Right ventricle myocardium inferior (tissue), 1 donor: ENCODE measurements at regions of chr10 and their contacts with region 1.

Region 1: GRCh38 chr10:15168781-15169554 is 475 bp upstream of the NMT2 start:
- DNase-seq: peak; percentile 96
- ATAC-seq: peak; percentile 91

Region 2: GRCh38 chr10:14604181-14605142 is 564.5 kb before region 1 on chr10:
- intact Hi-C with region 1: loop called (anchors 10 kb)
- DNase-seq: peak; percentile 93
- ATAC-seq: peak; percentile 98

Region 3: GRCh38 chr10:14878266-14879054 is 290.5 kb before region 1 on chr10 and contains the start of gene SUV39H2:
- intact Hi-C with region 1: loop called (anchors 5 kb)
- DNase-seq: peak; percentile 98
- ATAC-seq: peak; percentile 99
- total RNA-seq, gene SUV39H2: 4.9 TPM

Region 4: DNA sequence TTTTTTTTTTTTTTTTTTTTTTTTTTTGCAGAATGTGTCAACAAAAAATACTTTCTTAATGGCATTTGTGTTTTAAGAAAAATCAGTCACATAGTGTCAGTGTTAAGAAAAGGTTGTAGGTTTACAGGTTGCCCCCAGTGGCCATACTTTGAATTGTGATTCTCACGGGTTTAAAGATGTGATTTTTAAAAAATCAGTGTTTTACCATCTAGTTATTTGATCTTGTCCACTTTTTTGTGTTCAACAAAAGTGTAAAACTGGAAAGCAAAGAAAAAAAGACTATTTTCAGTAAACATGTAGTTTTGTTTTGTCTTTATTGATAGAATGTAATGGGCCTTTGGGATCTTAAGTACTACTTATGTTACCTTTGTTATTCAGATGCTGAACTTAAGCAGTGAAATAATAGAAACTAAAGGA is 264.6 kb before region 1 on chr10:
- intact Hi-C with region 1: no loop called
- DNase-seq: no peak
- ATAC-seq: no peak

Region 5: GRCh38 chr10:14959276-14960057 is 209.5 kb before region 1 on chr10 and contains the start of gene MEIG1:
- intact Hi-C with region 1: loop called (anchors 2 kb)
- DNase-seq: peak; percentile 95
- ATAC-seq: peak; percentile 99
- total RNA-seq, gene MEIG1: not detected

Region 6: GRCh38 chr10:15112657-15113056 is 56.3 kb before region 1 on chr10:
- intact Hi-C with region 1: loop called (anchors 5 kb)
- DNase-seq: no peak
- ATAC-seq: no peak

Region 7: GRCh38 chr10:15196021-15196834 is 27.3 kb after region 1 on chr10:
- intact Hi-C with region 1: loop called (anchors 2 kb)
- DNase-seq: no peak
- ATAC-seq: peak; percentile 44

Region 8: DNA sequence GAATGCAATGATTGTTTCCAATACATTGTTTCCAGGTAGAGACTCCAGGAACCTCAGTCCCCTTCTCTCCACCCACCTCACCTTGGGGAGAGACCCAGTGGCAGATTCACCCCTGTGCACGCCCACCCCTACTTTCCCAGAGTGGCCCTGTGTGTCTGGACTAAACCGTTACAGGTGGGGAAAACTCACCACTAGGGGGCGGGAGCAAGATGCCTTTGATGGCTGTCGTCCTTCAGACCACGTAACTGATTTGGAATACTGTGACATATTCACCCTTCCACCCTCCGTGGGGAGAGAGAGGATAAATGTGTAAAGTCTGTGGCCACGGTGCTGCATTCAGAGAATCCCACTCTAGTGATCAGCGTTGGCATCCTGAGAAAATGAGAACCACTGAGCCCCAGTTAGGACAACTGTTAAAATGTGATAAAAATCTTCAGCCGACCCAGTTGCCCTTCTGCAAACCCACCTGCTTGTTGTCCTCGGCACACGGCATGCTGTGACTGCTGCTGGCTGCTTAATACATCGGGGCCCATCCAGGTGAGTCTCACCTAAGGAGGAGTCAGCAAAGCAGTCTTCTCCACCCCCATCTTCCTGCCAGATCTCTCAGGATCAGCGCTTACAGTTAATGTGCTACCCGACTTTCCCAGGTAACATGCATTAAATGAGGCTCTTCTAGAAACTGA is 41.0 kb after region 1 on chr10:
- intact Hi-C with region 1: no loop called
- DNase-seq: peak; percentile 73
- ATAC-seq: peak; percentile 85